ENCODE measurements at regions of chr16 and their contacts with region 1.

Region 1: DNA sequence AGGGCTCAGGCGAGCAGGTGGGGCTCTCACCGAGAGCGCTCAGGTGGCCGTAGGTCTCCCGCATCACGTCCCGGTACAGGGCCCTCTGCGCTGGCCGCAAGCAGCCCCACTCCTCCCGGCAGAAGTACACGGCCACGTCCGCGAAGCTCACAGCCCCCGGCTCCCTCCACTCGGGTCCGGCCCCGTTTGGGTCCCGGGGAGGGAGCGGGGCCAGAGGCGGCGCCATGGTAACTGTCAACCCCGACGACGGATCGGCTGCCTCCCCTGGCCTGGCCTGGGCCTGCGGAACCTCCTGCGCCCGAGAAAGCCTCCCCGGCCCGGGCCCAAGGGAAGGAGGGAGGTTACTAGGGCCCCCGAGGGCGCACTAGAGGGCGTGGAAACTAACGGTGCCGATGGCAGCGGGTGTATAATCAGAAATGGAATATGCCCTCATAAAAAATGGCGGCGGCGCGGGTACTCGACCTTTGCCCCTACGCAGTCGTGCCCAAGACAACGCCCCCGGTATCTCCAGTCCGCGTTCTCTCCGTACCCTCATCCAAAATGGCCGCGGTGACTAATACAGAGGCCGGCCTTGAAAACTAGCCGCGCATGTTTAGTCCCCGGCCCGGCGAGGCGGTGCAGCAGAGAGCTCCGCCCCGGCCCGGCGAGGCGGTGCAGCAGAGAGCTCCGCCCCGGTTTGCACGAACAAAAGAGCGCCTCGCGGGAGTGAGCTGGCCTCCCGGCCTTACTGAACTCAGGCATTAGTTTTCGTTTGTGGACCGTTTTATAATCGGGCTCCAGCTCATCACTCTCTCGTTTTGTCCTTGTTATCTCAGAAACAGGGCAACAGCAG is at the start of gene ZNF764:
- DNase-seq: peak; percentile 98 to 99
- ATAC-seq: peak; percentile 95 to 96 (median 96)
- H3K4me3 ChIP-seq: peak within 1 kb of the TSS; percentile 96
- H3K27ac ChIP-seq: peak within 1 kb of the TSS; percentile 97
- H3K4me1 ChIP-seq: peaks cover 30% of the 10 kb centered on the region
- H3K27me3 ChIP-seq: no peaks in the 10 kb centered on the region
- CTCF ChIP-seq: no peak
- total RNA-seq, gene ZNF764: 2.7 to 8.7 (median 5.2) TPM

Region 2: GRCh38 chr16:30335598-30336474 is 222.3 kb before region 1 on chr16:
- intact Hi-C with region 1: no loop called
- DNase-seq: peak in 1 of 2 donors; percentile 76
- ATAC-seq: peak; percentile 35 to 66 (median 50)
- H3K4me3 ChIP-seq: peak overlapping the region; percentile 82
- H3K27ac ChIP-seq: peak overlapping the region; percentile 97
- H3K4me1 ChIP-seq: peaks cover 8% of the 10 kb centered on the region
- H3K27me3 ChIP-seq: no peaks in the 10 kb centered on the region
- CTCF ChIP-seq: no peak

Region 3: DNA sequence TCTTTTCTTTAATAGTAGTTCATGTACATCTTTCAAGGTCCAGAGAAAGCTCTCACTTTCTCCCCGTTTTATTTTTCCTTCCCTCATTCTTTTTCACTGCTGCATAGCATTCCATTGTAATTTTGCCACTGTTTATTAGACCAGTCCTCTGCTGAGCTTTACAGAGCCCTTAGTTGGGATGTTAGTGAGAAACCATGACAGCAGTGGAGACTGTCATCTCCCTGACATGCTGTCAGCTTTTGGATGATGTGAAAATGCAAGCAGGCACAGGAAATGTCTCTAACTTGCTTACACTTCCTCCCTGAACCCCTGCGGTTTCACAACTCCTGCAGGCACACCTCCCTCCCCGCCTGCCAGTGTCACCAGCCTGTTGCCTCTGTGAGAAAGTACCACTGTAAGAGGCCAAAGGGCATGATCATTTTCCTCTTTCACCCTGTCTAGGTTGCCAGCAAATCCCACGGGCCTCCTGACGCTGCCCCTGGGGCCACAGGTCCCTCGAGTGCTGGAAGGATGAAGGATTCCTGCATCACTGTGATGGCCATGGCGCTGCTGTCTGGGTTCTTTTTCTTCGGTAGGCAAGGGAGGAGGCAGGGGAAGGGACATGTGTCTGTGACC is 85.7 kb before region 1 on chr16 and contains the start of gene ITGAL:
- intact Hi-C with region 1: no loop called
- DNase-seq: peak; percentile 32 to 60
- ATAC-seq: no peak
- H3K4me3 ChIP-seq: no peak within 1 kb of the TSS
- H3K27ac ChIP-seq: no peak within 1 kb of the TSS
- H3K4me1 ChIP-seq: no peaks in the 10 kb centered on the region
- H3K27me3 ChIP-seq: peaks cover 0 to 22% (median 7%) of the 10 kb centered on the region in 3 donors
- CTCF ChIP-seq: no peak
- total RNA-seq, gene ITGAL: 1.1 to 3.0 (median 2.3) TPM

Region 4: DNA sequence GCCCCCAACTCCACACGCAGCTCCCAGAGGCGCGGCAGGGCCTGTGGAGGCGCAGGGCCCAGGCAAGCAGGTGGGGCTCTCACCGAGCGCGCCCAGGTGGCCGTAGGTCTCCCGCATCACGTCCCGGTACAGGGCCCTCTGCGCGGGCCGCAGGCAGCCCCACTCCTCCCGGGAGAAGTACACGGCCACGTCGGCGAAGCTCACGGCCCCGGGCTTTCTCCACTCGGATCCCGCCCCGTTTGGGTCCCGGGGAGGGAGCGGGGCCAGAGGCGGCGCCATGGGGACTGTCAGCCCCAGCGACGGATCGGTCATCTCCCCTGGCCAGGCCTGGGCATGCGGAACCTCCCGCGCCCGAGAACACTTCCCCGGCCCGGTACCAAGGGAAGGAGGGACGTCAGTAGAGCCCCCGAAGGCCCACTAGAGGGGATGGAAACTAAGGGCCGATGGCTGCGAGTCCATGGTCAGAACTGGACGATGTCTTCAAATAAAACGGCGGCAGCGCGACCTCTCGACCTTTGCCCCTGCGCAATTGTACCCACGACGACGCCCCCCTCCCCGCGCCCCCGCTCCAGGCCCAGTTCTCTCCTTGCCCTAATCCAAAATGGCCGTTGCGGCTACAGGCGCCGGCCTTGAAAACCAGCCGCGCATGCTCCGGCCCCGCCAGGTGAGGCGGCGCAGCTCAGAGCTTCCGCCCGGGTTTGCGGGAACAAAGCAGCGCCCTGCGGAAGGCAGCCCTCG is 23.6 kb before region 1 on chr16 and contains the start of gene ZNF747:
- intact Hi-C with region 1: loop called (anchors 1 to 2 kb)
- DNase-seq: peak; percentile 95 to 97
- ATAC-seq: peak; percentile 91 to 94 (median 92)
- H3K4me3 ChIP-seq: peak within 1 kb of the TSS; percentile 94
- H3K27ac ChIP-seq: peak within 1 kb of the TSS; percentile 97
- H3K4me1 ChIP-seq: peaks cover 17% of the 10 kb centered on the region
- H3K27me3 ChIP-seq: no peaks in the 10 kb centered on the region
- CTCF ChIP-seq: peak; percentile 0
- total RNA-seq, gene ZNF747: 6.4 to 16.4 (median 8.9) TPM

Region 5: GRCh38 chr16:30728899-30729672 is 170.9 kb after region 1 on chr16:
- intact Hi-C with region 1: no loop called
- DNase-seq: no peak
- ATAC-seq: peak in 1 of 4 donors; percentile 24
- H3K4me3 ChIP-seq: no peak overlapping the region
- H3K27ac ChIP-seq: no peak overlapping the region
- H3K4me1 ChIP-seq: no peaks in the 10 kb centered on the region
- H3K27me3 ChIP-seq: no peaks in the 10 kb centered on the region
- CTCF ChIP-seq: no peak

Region 6: DNA sequence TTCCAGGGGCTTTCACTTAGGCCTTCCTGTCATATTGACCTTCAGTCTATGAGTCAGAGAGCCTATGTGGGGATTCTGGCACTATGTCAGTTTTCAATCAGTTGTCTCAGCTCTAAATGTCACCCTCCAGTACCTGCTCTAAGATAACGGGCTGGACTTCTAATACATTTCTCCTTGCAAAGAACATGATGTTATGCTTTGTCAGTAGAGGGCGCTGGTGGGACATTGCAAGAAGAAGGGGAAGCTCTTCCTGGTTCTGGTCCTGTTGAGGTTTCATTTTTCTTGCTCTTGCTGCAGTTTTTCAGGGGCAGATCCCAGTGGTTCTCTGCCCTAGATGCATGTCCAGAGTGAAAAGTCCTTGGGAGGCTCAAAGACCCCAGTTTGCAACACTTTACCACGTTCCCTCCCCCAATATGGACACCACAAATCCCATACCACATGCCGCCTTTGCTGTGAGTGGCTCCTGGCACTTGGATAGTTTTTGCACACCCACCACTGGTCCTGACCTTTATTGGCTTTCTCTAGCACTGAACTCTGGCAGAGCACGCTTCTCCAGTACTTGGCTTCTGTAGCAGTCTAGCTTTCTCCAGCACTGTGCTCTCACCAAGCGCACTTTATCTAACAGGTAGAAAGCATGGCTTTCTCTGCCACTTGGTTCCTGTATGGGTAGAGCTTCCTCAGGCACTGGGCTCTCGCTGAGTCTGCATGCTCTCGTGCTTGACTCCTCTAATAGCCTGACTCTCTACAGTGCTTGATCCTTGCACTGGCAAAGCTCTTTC is 286.7 kb after region 1 on chr16:
- intact Hi-C with region 1: no loop called
- DNase-seq: peak; percentile 35 to 68
- ATAC-seq: peak; percentile 82 to 97 (median 85)
- H3K4me3 ChIP-seq: peak overlapping the region; percentile 53
- H3K27ac ChIP-seq: peak overlapping the region; percentile 58
- H3K4me1 ChIP-seq: peaks cover 10% of the 10 kb centered on the region
- H3K27me3 ChIP-seq: no peaks in the 10 kb centered on the region
- CTCF ChIP-seq: peak; percentile 85